AG04449 (cell line): ENCODE measurements at regions of chr16 and their contacts with region 1.

Region 1: GRCh38 chr16:30065143-30065850 is at the start of gene ALDOA:
- DNase-seq: peak; percentile 91
- H3K4me3 ChIP-seq: peak within 1 kb of the TSS; percentile 99
- CTCF ChIP-seq: no peak

Region 2: GRCh38 chr16:30052671-30053372 is 12.5 kb before region 1 on chr16:
- CTCF ChIA-PET with region 1: interaction called, 17 read pairs
- POLR2A ChIA-PET with region 1: interaction called, 36 read pairs
- DNase-seq: no peak
- H3K4me3 ChIP-seq: peak overlapping the region; percentile 83
- CTCF ChIP-seq: no peak

Region 3: GRCh38 chr16:30075507-30076275 is 10.4 kb after region 1 on chr16 and contains the start of gene PPP4C:
- CTCF ChIA-PET with region 1: interaction called, 9 read pairs
- POLR2A ChIA-PET with region 1: interaction called, 66 read pairs
- DNase-seq: no peak
- H3K4me3 ChIP-seq: peak within 1 kb of the TSS; percentile 96
- CTCF ChIP-seq: peak; percentile 25